ENCODE measurements at regions of chr3 and their contacts with region 1.

Region 1: GRCh38 chr3:156674046-156674910 is at the start of gene TIPARP:
- DNase-seq: peak; percentile 99 to 100 (median 100)
- ATAC-seq: peak; percentile 94
- H3K4me3 ChIP-seq: peak within 1 kb of the TSS; percentile 84 to 92
- H3K27ac ChIP-seq: peak within 1 kb of the TSS; percentile 98 to 99
- H3K4me1 ChIP-seq: peaks cover 9 to 65% of the 10 kb centered on the region in 2 donors
- H3K27me3 ChIP-seq: no peaks in the 10 kb centered on the region
- CTCF ChIP-seq: peak; percentile 43 to 71
- polyA plus RNA-seq, gene TIPARP: 21.0 to 36.4 (median 26.5) TPM

Region 2: GRCh38 chr3:156554842-156555687 is 119.2 kb before region 1 on chr3 and contains the start of gene SSR3:
- intact Hi-C with region 1: loop called in 1 of 2 experiments (anchors 10 kb)
- DNase-seq: peak; percentile 97 to 100 (median 99)
- ATAC-seq: peak; percentile 100
- H3K4me3 ChIP-seq: peak within 1 kb of the TSS; percentile 72 to 93
- H3K27ac ChIP-seq: peak within 1 kb of the TSS; percentile 84 to 90
- H3K4me1 ChIP-seq: peaks cover 22 to 36% of the 10 kb centered on the region in 2 donors
- H3K27me3 ChIP-seq: no peaks in the 10 kb centered on the region
- CTCF ChIP-seq: peak; percentile 22 to 48
- polyA plus RNA-seq, gene SSR3: 94.3 to 128 (median 124) TPM

Region 3: DNA sequence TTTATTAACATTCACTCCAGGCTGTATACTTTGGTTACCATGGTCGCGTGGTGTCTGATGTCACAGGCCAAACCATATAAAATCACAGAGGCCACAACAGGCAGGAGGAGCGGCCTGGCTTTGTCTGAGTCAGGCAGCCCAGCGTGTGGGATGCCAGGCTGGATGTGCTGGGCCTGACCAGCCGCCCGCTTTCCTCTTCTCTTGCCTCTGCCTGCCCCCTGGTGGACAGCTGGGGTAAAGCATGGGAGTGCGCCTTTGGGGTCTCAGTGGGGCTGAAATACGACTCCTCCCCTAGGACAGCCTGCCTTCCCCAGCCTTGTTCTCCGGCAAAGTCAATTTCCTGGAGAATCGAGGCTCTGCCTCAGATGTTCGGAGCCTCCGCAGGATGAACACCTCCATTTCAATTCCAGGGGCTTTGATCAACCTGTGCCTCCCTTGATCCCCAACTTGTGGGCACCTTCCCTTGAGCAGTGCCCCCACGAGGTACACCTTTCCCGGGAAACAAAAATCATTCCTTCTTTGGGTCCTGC is 407.5 kb after region 1 on chr3:
- intact Hi-C with region 1: loop called in 1 of 2 experiments (anchors 10 kb)
- DNase-seq: peak; percentile 77 to 94 (median 88)
- ATAC-seq: peak; percentile 99
- H3K4me3 ChIP-seq: no peak overlapping the region
- H3K27ac ChIP-seq: no peak overlapping the region
- H3K4me1 ChIP-seq: peaks cover 0 to 11% of the 10 kb centered on the region in 2 donors
- H3K27me3 ChIP-seq: no peaks in the 10 kb centered on the region
- CTCF ChIP-seq: peak; percentile 96 to 97

Region 4: DNA sequence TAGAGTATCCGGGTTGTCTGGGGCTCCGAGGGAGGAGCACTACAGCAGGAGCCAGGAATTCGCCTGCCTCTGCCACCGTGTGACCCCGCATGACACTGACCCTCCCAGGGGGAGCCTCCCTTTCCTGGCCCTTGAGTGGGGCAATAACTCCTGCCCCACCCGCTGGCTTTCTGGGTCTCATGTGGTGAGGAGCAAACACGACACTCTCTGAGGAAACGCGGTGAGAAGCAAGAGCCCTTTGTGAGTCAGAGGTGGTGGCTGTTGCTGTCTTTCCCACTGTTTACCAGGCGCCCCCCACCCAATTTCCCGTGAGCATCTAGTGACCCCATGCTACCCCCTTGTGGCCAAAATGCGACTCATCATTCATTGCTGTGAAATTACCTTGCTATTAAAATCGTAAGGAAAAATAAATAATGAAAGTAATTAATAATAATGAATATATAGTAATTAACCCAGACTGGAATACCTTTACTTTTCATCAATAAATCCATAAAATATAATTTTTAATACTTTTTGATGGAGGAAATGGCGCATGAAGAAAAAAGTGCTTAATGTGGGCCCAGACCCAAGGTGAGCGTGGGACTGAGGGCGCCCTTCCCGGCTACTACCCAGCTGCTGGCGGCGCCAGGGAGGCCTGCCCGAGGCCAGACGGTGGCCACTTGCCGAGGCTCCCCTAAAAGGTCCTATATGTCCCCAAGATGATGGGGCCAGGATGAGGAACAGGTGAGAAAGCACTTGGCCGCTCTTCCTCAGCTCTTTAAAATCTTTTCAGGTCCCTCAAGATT is 456.4 kb after region 1 on chr3:
- intact Hi-C with region 1: loop called in 1 of 2 experiments (anchors 10 kb)
- DNase-seq: peak in 2 of 4 donors; percentile 58 to 63
- ATAC-seq: peak; percentile 35
- H3K4me3 ChIP-seq: no peak overlapping the region
- H3K27ac ChIP-seq: peak overlapping the region; percentile 45 to 75
- H3K4me1 ChIP-seq: peaks cover 28 to 70% of the 10 kb centered on the region in 2 donors
- H3K27me3 ChIP-seq: no peaks in the 10 kb centered on the region
- CTCF ChIP-seq: peak; percentile 51 to 67